ENCODE measurements at regions of chr11 and their contacts with region 1.

Region 1: DNA sequence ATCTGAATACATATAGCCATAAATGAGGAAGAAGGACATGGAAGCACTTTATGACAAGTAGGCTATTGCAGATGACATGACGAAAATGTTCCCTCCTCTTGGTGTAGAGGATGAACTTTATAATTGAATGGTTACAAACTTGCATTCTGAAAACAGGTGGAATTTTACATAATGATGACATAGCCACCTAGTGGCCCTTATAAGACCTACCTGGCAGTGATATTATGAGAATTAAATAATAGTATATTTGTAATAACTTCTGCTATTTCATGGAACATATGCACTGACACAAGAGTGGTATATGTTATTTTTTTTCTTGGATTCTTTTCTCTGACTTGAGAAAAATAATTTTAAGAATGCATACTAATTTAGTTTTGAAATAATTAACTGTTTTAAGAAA is 22.9 kb downstream of the TRIM22 start:
- DNase-seq: no peak
- H3K4me3 ChIP-seq: no peak overlapping the region
- H3K27ac ChIP-seq: no peak overlapping the region
- H3K4me1 ChIP-seq: no peaks in the 10 kb centered on the region
- H3K27me3 ChIP-seq: peaks cover 0 to 1% (median 0%) of the 10 kb centered on the region in 4 experiments; a peak in 1 of 7 replicates
- CTCF ChIP-seq: peak in 1 of 3 experiments; percentile 6; a peak in 1 of 4 replicates
- EP300 ChIP-seq: no peak
- POLR2A ChIP-seq: no peak
- RAD21 ChIP-seq: peak; percentile 10 to 26; a peak in 2 of 4 replicates

Region 2: DNA sequence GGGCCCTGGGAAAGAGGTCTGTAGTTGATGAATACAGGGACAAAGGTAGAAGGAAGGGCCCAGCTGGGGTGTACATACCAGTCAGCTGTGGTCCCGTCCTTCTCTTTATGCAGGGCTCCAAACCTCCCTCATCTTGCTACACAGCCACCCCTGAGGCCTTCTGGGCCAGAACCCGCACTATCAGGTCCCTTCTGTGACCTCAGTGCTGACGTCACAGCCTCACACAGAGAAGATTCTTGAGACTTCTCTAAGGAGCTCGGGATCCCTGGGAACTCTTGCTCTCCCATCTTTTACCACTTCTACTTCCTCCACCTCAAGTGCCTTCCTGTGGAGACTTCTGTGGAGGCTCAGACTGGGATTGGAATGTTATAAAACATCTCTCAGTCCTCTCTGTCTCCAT is 202.7 kb before region 1 on chr11 and contains the start of gene UBQLN3:
- CTCF ChIA-PET with region 1: no interaction called
- POLR2A ChIA-PET with region 1: no interaction called
- DNase-seq: no peak
- H3K4me3 ChIP-seq: no peak within 1 kb of the TSS
- H3K27ac ChIP-seq: no peak within 1 kb of the TSS
- H3K4me1 ChIP-seq: peaks cover 0 to 2% (median 0%) of the 10 kb centered on the region in 4 experiments; a peak in 1 of 7 replicates
- H3K27me3 ChIP-seq: no peaks in the 10 kb centered on the region
- CTCF ChIP-seq: no peak
- EP300 ChIP-seq: no peak
- POLR2A ChIP-seq: no peak
- RAD21 ChIP-seq: no peak
- total RNA-seq, gene UBQLN3: not detected in 2 replicates

Region 3: DNA sequence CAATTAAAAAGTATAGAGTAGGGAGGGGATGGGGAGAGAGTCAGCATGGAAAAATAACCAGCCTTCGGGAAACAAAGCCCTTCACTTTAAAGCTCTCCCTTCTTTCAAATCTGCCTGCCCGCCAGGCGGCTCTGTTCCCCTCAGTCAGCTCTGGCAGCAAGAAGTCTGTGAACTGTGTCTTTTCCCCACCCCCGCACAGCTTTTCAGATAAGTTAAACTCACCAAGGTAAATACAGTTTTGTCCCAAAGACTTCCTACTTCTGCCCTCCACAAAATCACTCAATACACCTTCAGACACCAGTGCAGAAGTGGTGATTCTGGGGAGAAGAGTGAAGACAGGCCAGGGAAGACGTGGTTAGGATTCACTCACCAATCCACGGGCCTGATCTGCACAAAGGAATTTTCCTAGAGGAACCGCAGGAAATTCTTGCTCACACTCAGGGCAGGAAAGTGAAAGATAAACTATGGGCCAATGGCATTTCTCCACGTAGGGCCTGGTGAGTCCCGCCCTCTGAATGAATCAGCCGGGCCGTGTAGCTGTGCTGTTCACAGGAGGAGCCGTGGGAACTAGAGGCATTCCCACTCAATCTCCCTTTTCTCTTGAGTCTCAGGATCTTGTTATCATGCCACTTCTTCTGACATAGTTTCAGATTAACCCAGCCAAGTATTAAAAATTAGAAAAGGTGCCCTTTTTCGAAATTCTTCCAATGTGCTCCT is 27.7 kb before region 1 on chr11 and contains the start of gene TRIM5:
- CTCF ChIA-PET with region 1: interaction called, 21 read pairs
- POLR2A ChIA-PET with region 1: interaction called, 3 read pairs
- DNase-seq: peak; percentile 41 to 72
- H3K4me3 ChIP-seq: peak within 1 kb of the TSS; percentile 26 to 62 (median 42); a peak in 7 of 8 replicates
- H3K27ac ChIP-seq: peak within 1 kb of the TSS; percentile 82
- H3K4me1 ChIP-seq: peaks cover 0 to 4% (median 2%) of the 10 kb centered on the region in 4 experiments; a peak in 4 of 7 replicates
- H3K27me3 ChIP-seq: no peaks in the 10 kb centered on the region
- CTCF ChIP-seq: peak; percentile 37 to 53 (median 47); a peak in 3 of 4 replicates
- EP300 ChIP-seq: no peak
- POLR2A ChIP-seq: peak in 1 of 2 experiments; percentile 85; a peak in 2 of 3 replicates
- RAD21 ChIP-seq: peak; percentile 39 to 54
- total RNA-seq, gene TRIM5: 33.3 and 35.5 TPM in 2 replicates

Region 4: GRCh38 chr11:5700421-5701054 is 12.0 kb before region 1 on chr11:
- CTCF ChIA-PET with region 1: interaction called, 17 read pairs
- POLR2A ChIA-PET with region 1: no interaction called
- DNase-seq: no peak
- H3K4me3 ChIP-seq: no peak overlapping the region
- H3K27ac ChIP-seq: no peak overlapping the region
- H3K4me1 ChIP-seq: no peaks in the 10 kb centered on the region
- H3K27me3 ChIP-seq: no peaks in the 10 kb centered on the region
- CTCF ChIP-seq: no peak
- EP300 ChIP-seq: no peak
- POLR2A ChIP-seq: no peak
- RAD21 ChIP-seq: no peak

Measured in H1 (cell line).